ENCODE measurements at regions of chr1 and their contacts with region 1.

Region 1: GRCh38 chr1:20485527-20486456 is at the start of gene CAMK2N1:
- DNase-seq: peak; percentile 36 to 78 (median 56)
- ATAC-seq: peak; percentile 73 to 79 (median 76)
- H3K4me3 ChIP-seq: peak within 1 kb of the TSS; percentile 20 to 53 (median 32)
- H3K27ac ChIP-seq: peak within 1 kb of the TSS; percentile 23 to 55 (median 43)
- H3K4me1 ChIP-seq: peaks cover 0 to 11% (median 0%) of the 10 kb centered on the region in 3 donors
- H3K27me3 ChIP-seq: peaks cover 0 to 17% (median 2%) of the 10 kb centered on the region in 4 donors
- CTCF ChIP-seq: no peak
- total RNA-seq, gene CAMK2N1: 3.4 to 9.3 (median 5.5) TPM

Region 2: DNA sequence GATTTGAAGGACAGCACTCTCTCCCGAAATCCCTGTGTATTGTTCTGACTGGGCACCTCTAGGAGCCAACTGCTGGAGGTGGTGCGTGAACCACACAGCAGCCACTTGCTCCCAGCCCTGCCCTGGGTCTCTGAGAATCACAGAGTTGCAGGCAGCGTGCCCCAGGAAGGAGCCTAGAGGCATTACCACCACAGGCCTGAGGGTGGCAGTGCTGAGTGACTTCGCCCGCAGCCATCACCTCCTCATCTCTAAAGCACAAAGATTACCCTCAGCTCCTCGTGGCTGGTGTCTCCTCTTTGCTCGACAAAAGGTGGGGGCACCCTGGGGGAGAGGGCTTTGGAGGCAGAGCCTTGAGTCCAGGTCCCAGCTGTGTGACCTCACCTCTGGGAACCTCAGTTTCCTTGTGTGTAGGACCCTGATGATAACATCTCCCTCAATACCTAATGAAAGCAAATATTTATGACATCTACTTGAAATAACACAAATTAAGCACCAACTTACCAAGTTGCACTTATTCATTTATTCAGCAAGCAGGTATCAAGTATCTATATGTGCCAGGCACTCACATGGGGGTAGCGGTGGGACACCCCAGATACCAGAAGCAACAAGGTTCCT is 108.8 kb before region 1 on chr1:
- intact Hi-C with region 1: loop called in 1 of 3 experiments (anchors 5 kb)
- DNase-seq: peak in 2 of 6 donors; percentile 56 to 80
- ATAC-seq: peak; percentile 55 to 91 (median 85)
- H3K4me3 ChIP-seq: no peak overlapping the region
- H3K27ac ChIP-seq: no peak overlapping the region
- H3K4me1 ChIP-seq: no peaks in the 10 kb centered on the region
- H3K27me3 ChIP-seq: peaks cover 0 to 6% (median 0%) of the 10 kb centered on the region in 4 donors
- CTCF ChIP-seq: peak; percentile 52 to 63 (median 58)